Naive thymus-derived CD4-positive, alpha-beta T cell (primary cell): ENCODE measurements at regions of chr16 and their contacts with region 1.

Region 1: DNA sequence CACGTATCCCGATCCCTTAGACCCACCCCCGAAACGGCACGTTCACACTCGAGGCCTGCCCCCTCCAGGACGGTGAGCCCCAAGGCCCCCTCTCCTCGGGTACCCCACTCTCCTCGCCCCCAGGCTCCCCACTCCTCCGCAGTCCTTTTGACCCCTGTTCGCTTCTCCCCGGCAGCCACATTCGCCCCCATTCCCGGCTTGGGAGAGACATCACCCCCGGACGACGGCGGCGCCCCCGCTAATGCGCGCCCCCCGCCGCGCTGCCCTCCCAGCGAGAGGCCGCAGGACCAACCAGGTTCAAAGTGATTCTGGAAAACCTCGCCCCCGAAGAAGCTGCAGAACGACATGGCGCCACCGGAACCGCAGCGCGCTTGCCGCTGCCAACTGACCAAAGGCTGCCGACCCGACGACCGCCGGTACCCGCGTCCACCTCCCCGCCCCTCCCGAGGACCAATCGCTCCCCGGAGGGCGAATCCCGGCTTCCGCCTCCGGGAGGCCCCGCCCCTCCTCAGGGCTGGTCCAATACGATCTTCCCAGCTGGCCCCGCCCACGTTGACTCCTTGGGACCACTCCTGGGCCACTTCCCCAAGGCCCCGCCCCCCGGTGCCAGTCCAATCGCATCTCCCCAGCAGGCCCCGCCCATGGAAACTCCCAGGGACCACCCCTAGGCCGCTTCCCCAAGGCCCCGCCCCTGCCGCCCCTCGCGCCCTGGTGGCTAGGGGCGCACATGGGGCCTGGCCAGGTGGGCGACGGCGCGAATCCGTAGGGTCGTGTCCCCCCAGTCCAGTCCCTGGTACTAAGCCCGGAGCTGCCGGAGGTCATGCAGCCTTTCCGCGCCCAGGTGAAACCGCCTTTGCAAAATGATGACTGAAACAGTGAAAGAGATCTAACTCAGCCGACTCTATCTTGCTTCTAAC is at the start of gene MSRB1:
- DNase-seq: peak; percentile 97 to 100 (median 98)
- ATAC-seq: peak; percentile 100
- H3K4me3 ChIP-seq: peak within 1 kb of the TSS; percentile 90
- H3K4me3 Mint-ChIP-seq: peak within 1 kb of the TSS; percentile 74 to 90 (median 87)
- H3K27ac ChIP-seq: peak within 1 kb of the TSS; percentile 76
- H3K27ac Mint-ChIP-seq: peak within 1 kb of the TSS; percentile 41 to 90 (median 65)
- H3K4me1 ChIP-seq: peaks cover 6 to 7% of the 10 kb centered on the region in 2 donors
- H3K4me1 Mint-ChIP-seq: peaks cover 4 to 24% (median 11%) of the 10 kb centered on the region in 7 donors
- H3K27me3 ChIP-seq: no peaks in the 10 kb centered on the region
- H3K27me3 Mint-ChIP-seq: no peaks in the 10 kb centered on the region
- total RNA-seq, gene MSRB1: 5.5 to 27.0 (median 8.2) TPM

Region 2: DNA sequence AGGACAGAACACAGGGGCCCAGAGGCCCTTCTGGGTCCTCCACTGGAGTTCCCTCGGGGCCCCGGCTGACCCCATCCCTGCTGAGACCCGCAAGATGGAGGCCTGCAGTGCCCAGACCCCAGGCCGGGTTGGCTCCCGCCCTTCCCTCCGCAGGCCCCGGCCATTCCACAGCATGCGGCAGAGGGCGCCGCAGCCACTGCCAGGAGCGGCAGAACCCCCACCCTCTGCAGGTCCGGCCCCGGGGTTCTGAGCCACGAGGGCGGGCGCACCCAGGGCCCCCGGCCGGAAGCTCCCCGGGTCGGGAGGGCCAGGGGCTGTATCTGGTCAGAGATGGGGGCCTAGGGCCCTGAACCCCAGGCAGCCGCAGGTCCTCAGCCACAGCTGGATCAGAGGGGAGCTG is 514.6 kb before region 1 on chr16:
- CTCF ChIA-PET with region 1: no interaction called
- POLR2A ChIA-PET with region 1: no interaction called
- intact Hi-C with region 1: loop called in 1 of 2 experiments (anchors 10 kb)
- DNase-seq: peak in 6 of 9 donors; percentile 23 to 63 (median 38)
- ATAC-seq: peak; percentile 73
- H3K4me3 ChIP-seq: no peak overlapping the region
- H3K4me3 Mint-ChIP-seq: peak overlapping the region in 1 of 10 donors; percentile 53
- H3K27ac ChIP-seq: no peak overlapping the region
- H3K27ac Mint-ChIP-seq: no peak overlapping the region
- H3K4me1 ChIP-seq: no peaks in the 10 kb centered on the region
- H3K4me1 Mint-ChIP-seq: peaks cover 0 to 3% (median 0%) of the 10 kb centered on the region in 7 donors
- H3K27me3 ChIP-seq: no peaks in the 10 kb centered on the region
- H3K27me3 Mint-ChIP-seq: peaks cover 0 to 2% (median 0%) of the 10 kb centered on the region in 5 donors

Region 3: DNA sequence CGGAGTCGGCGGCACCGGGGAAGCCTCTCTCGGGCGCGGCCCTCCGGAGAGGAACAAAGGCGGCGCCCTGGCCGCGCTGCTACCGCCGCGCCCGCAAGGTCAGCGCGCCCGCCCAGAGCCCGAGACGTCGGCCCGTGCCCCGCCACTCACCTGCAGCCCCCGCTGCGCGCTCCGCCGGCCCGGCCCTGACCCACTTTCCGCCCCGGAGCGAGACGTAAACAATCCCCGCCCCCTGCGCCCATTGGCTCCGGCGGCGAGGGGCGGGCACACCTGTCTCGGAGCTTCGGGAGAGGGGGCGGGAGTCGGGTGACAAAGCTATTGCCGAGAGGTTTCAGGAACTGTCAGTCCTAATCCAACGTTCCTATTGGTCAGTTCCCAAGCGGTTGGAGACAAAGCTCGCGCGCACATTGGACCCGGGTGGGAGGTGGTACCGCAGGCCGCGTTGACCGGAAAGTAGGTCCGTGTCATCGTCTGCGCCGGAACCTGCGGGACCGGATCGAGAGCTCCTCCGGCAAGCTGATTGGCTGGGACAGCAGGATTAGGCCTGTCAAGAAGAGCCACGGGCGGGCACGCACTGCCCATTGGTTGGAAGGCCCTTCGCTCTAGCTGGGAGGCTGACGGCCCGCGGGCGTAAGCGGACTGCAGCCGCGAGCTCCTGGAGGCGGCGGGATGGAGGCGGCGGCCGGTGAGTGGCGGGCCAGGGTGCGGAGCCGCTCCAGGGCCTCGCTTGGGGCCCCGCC is 160.5 kb before region 1 on chr16 and contains the starts of genes NUBP2 and SPSB3:
- CTCF ChIA-PET with region 1: no interaction called
- POLR2A ChIA-PET with region 1: interaction called, 7 read pairs
- intact Hi-C with region 1: loop called in 1 of 2 experiments (anchors 2 kb)
- DNase-seq: peak; percentile 83 to 98 (median 97)
- ATAC-seq: peak; percentile 92
- H3K4me3 ChIP-seq: peak within 1 kb of the TSS; percentile 92
- H3K4me3 Mint-ChIP-seq: peak within 1 kb of the TSS; percentile 90 to 98 (median 94)
- H3K27ac ChIP-seq: peak within 1 kb of the TSS; percentile 76
- H3K27ac Mint-ChIP-seq: peak within 1 kb of the TSS; percentile 77 to 98 (median 93)
- H3K4me1 ChIP-seq: peaks cover 13 to 28% of the 10 kb centered on the region in 2 donors
- H3K4me1 Mint-ChIP-seq: peaks cover 0 to 48% (median 22%) of the 10 kb centered on the region in 7 donors
- H3K27me3 ChIP-seq: no peaks in the 10 kb centered on the region
- H3K27me3 Mint-ChIP-seq: peaks cover 0 to 2% (median 0%) of the 10 kb centered on the region in 5 donors
- total RNA-seq, gene NUBP2: 39.3 to 60.2 (median 48.6) TPM
- total RNA-seq, gene SPSB3: 38.2 to 127 (median 72.3) TPM

Region 4: GRCh38 chr16:1913327-1914083 is 29.6 kb before region 1 on chr16:
- CTCF ChIA-PET with region 1: no interaction called
- POLR2A ChIA-PET with region 1: no interaction called
- intact Hi-C with region 1: no loop called
- DNase-seq: no peak
- ATAC-seq: peak; percentile 18
- H3K4me3 ChIP-seq: no peak overlapping the region
- H3K4me3 Mint-ChIP-seq: no peak overlapping the region
- H3K27ac ChIP-seq: no peak overlapping the region
- H3K27ac Mint-ChIP-seq: no peak overlapping the region
- H3K4me1 ChIP-seq: no peaks in the 10 kb centered on the region
- H3K4me1 Mint-ChIP-seq: peaks cover 0 to 5% (median 0%) of the 10 kb centered on the region in 7 donors
- H3K27me3 ChIP-seq: no peaks in the 10 kb centered on the region
- H3K27me3 Mint-ChIP-seq: peaks cover 15 to 34% (median 28%) of the 10 kb centered on the region in 5 donors

Region 5: GRCh38 chr16:1959269-1960049 is 16.4 kb after region 1 on chr16 and contains the start of gene NDUFB10:
- CTCF ChIA-PET with region 1: no interaction called
- POLR2A ChIA-PET with region 1: interaction called, 52 read pairs
- intact Hi-C with region 1: loop called (anchors 1 kb)
- DNase-seq: peak; percentile 80 to 98 (median 89)
- ATAC-seq: peak; percentile 97
- H3K4me3 ChIP-seq: peak within 1 kb of the TSS; percentile 86
- H3K4me3 Mint-ChIP-seq: peak within 1 kb of the TSS; percentile 85 to 97 (median 91)
- H3K27ac ChIP-seq: peak within 1 kb of the TSS; percentile 92
- H3K27ac Mint-ChIP-seq: peak within 1 kb of the TSS; percentile 82 to 95 (median 90)
- H3K4me1 ChIP-seq: peaks cover 25 to 38% of the 10 kb centered on the region in 2 donors
- H3K4me1 Mint-ChIP-seq: peaks cover 21 to 41% (median 27%) of the 10 kb centered on the region in 7 donors
- H3K27me3 ChIP-seq: no peaks in the 10 kb centered on the region
- H3K27me3 Mint-ChIP-seq: peaks cover 0 to 2% (median 0%) of the 10 kb centered on the region in 5 donors
- total RNA-seq, gene NDUFB10: 40.0 to 114 (median 71.1) TPM

Region 6: GRCh38 chr16:1991948-1992703 is 49.1 kb after region 1 on chr16:
- CTCF ChIA-PET with region 1: no interaction called
- POLR2A ChIA-PET with region 1: interaction called, 3 read pairs
- intact Hi-C with region 1: loop called (anchors 1 kb)
- DNase-seq: peak; percentile 85 to 98 (median 92)
- ATAC-seq: peak; percentile 95
- H3K4me3 ChIP-seq: peak overlapping the region; percentile 39
- H3K4me3 Mint-ChIP-seq: peak overlapping the region in 9 of 10 donors; percentile 45 to 82 (median 75)
- H3K27ac ChIP-seq: peak overlapping the region; percentile 54
- H3K27ac Mint-ChIP-seq: peak overlapping the region in 7 of 9 donors; percentile 22 to 82 (median 62)
- H3K4me1 ChIP-seq: peaks cover 15 to 16% of the 10 kb centered on the region in 2 donors
- H3K4me1 Mint-ChIP-seq: peaks cover 5 to 33% (median 22%) of the 10 kb centered on the region in 7 donors
- H3K27me3 ChIP-seq: peaks cover 0 to 3% of the 10 kb centered on the region in 2 donors
- H3K27me3 Mint-ChIP-seq: peaks cover 8 to 14% (median 10%) of the 10 kb centered on the region in 5 donors